ENCODE measurements at regions of chr4 and their contacts with region 1.

Region 1: GRCh38 chr4:48944756-48945241 is 38.2 kb upstream of the OCIAD2 start:
- DNase-seq: peak in 4 of 7 donors; percentile 11 to 29 (median 20)
- H3K4me3 ChIP-seq: no peak overlapping the region
- H3K27ac ChIP-seq: no peak overlapping the region
- H3K4me1 ChIP-seq: no peaks in the 10 kb centered on the region
- H3K27me3 ChIP-seq: no peaks in the 10 kb centered on the region
- CTCF ChIP-seq: peak in 1 of 6 experiments; percentile 29
- POLR2A ChIP-seq: no peak

Region 2: DNA sequence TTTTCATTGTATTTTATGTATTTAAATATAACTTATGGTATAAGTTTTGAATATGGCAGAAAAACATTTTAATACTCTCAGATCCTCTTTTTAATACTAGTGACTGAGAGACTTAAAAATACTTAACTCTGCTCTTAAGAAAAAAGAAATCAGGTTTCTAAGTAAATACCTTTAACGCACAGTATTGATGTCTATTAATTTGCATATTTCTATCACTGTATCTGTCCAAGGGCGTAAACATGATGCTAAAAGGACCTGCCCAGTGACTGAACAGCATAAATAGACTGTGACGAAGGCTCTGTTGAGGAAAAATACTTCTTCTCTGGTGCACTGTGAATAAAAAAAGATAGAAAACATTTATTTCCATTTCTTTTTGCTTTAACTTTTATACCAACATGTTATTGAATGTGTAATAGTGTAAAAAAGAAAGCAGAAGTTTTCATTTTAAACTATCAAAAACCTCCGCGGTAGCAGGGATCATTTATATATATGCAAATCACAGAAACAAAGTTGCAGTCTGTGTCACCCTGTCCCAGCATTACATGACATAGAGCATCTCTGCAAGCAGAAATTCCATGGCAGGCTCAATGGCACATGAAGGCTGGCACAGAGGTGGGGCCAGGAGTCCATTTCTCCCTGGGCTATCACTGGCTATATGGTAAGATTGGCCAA is 379.3 kb before region 1 on chr4:
- intact Hi-C with region 1: loop called in 1 of 2 experiments (anchors 10 kb)
- DNase-seq: no peak
- H3K4me3 ChIP-seq: no peak overlapping the region
- H3K27ac ChIP-seq: no peak overlapping the region
- H3K4me1 ChIP-seq: no peaks in the 10 kb centered on the region
- H3K27me3 ChIP-seq: no peaks in the 10 kb centered on the region
- CTCF ChIP-seq: no peak
- POLR2A ChIP-seq: no peak

Measured in adrenal gland (tissue), 19 donors.